B cell (primary cell): ENCODE measurements at regions of chr13 and their contacts with region 1.

Region 1: GRCh38 chr13:99281811-99282263 is 23.7 kb upstream of the GPR18 start:
- DNase-seq: no peak
- ATAC-seq: peak; percentile 82
- H3K4me3 ChIP-seq: peak overlapping the region in 3 of 5 experiments; percentile 15 to 32 (median 31)
- H3K4me3 Mint-ChIP-seq: peak overlapping the region; percentile 73
- H3K27ac ChIP-seq: peak overlapping the region; percentile 85 to 89
- H3K27ac Mint-ChIP-seq: peak overlapping the region; percentile 95
- H3K4me1 ChIP-seq: peaks cover 87 to 88% of the 10 kb centered on the region in 2 donors
- H3K4me1 Mint-ChIP-seq: peaks cover 87% of the 10 kb centered on the region
- H3K27me3 ChIP-seq: no peaks in the 10 kb centered on the region
- H3K27me3 Mint-ChIP-seq: no peaks in the 10 kb centered on the region
- CTCF ChIP-seq: no peak

Region 2: GRCh38 chr13:99258210-99258860 is 23.5 kb before region 1 on chr13 and contains the start of gene GPR18:
- CTCF ChIA-PET with region 1: interaction called, 164 read pairs
- POLR2A ChIA-PET with region 1: no interaction called
- intact Hi-C with region 1: loop called (anchors 1 kb)
- DNase-seq: peak; percentile 75
- ATAC-seq: peak; percentile 66
- H3K4me3 ChIP-seq: peak within 1 kb of the TSS; percentile 60 to 98 (median 79)
- H3K4me3 Mint-ChIP-seq: peak within 1 kb of the TSS; percentile 98
- H3K27ac ChIP-seq: peak within 1 kb of the TSS; percentile 86 to 90
- H3K27ac Mint-ChIP-seq: peak within 1 kb of the TSS; percentile 96
- H3K4me1 ChIP-seq: peaks cover 57 to 68% of the 10 kb centered on the region in 2 donors
- H3K4me1 Mint-ChIP-seq: peaks cover 81% of the 10 kb centered on the region
- H3K27me3 ChIP-seq: no peaks in the 10 kb centered on the region
- H3K27me3 Mint-ChIP-seq: no peaks in the 10 kb centered on the region
- CTCF ChIP-seq: no peak
- total RNA-seq, gene GPR18: 17.6 and 19.1 TPM in 2 replicates

Region 3: DNA sequence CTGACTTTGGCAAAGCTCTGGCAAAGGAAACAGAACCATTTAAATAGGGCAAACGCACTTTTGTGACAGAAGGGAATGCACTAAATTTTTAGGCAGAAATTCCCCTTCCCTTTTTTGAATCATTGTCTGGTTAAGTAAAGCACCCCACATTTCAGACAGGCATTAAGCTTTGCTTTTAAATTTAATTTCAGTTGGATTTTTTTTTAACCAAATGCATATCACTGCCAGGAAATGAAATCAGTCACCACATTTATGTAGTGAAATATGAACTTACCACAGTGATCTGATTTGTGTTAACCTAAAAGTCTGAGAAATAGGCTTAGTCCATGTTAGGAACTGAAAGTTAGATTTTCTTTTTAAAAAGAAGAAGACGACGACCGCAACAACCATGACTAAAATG is 14.6 kb after region 1 on chr13:
- CTCF ChIA-PET with region 1: interaction called, 36 read pairs
- POLR2A ChIA-PET with region 1: interaction called, 3 read pairs
- intact Hi-C with region 1: loop called (anchors 1 kb)
- DNase-seq: peak; percentile 45
- ATAC-seq: no peak
- H3K4me3 ChIP-seq: peak overlapping the region in 3 of 5 experiments; percentile 2 to 47 (median 17)
- H3K4me3 Mint-ChIP-seq: peak overlapping the region; percentile 72
- H3K27ac ChIP-seq: peak overlapping the region; percentile 32 to 78
- H3K27ac Mint-ChIP-seq: peak overlapping the region; percentile 59
- H3K4me1 ChIP-seq: peaks cover 73 to 81% of the 10 kb centered on the region in 2 donors
- H3K4me1 Mint-ChIP-seq: peaks cover 82% of the 10 kb centered on the region
- H3K27me3 ChIP-seq: no peaks in the 10 kb centered on the region
- H3K27me3 Mint-ChIP-seq: no peaks in the 10 kb centered on the region
- CTCF ChIP-seq: no peak

Region 4: DNA sequence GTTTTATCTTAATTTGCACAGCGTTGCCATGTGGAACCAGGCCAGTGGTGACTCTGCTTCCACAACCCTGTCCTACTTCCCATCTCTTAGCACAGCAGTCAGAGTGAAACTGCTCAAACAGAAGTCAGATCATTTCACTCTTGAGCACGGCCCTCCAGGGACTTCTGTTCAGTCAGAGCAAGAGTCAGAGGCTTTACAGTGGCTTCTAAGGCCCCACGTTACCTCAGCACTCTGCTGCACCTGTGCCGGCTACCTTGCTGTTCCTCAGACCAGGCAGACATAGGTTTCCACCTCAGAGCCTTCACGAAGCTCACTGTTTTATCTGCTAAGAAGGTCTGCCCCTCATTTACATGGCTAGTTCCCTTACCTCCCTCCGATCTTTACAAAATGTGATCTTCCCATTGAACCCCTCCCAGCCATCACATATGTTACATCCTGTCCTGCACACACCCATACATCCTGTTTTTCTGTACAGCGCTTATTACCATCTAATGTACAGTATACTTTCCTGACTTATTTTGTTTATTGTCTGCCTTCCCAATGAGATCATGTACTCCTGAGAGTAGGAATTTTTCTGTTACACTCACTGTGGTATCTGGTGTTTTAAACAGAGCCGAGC is 261.1 kb after region 1 on chr13:
- CTCF ChIA-PET with region 1: no interaction called
- POLR2A ChIA-PET with region 1: interaction called, 3 read pairs
- intact Hi-C with region 1: loop called (anchors 5 kb)
- DNase-seq: peak; percentile 93
- ATAC-seq: peak; percentile 97
- H3K4me3 ChIP-seq: peak overlapping the region in 2 of 5 experiments; percentile 10 to 49
- H3K4me3 Mint-ChIP-seq: peak overlapping the region; percentile 56
- H3K27ac ChIP-seq: peak overlapping the region; percentile 83 to 89
- H3K27ac Mint-ChIP-seq: peak overlapping the region; percentile 89
- H3K4me1 ChIP-seq: peaks cover 31 to 53% of the 10 kb centered on the region in 2 donors
- H3K4me1 Mint-ChIP-seq: peaks cover 50% of the 10 kb centered on the region
- H3K27me3 ChIP-seq: no peaks in the 10 kb centered on the region
- H3K27me3 Mint-ChIP-seq: no peaks in the 10 kb centered on the region
- CTCF ChIP-seq: no peak